IMR-90 (cell line): ENCODE measurements at regions of chr1 and their contacts with region 1.

Region 1: GRCh38 chr1:107782217-107782845 is 182.6 kb downstream of the VAV3 start:
- DNase-seq: peak; percentile 53
- ATAC-seq: peak; percentile 68; the same call in 1 of the 2 replicates
- H3K4me3 ChIP-seq: no peak overlapping the region
- H3K27ac ChIP-seq: no peak overlapping the region
- H3K4me1 ChIP-seq: no peaks in the 10 kb centered on the region
- H3K27me3 ChIP-seq: no peaks in the 10 kb centered on the region
- CTCF ChIP-seq: peak; percentile 68
- POLR2A ChIP-seq: no peak
- RAD21 ChIP-seq: peak; percentile 70

Region 2: GRCh38 chr1:107626911-107627310 is 155.4 kb before region 1 on chr1:
- CTCF ChIA-PET with region 1: no interaction called
- POLR2A ChIA-PET with region 1: no interaction called
- dilution Hi-C with region 1: no loop called
- in situ Hi-C with region 1: no loop called
- intact Hi-C with region 1: no loop called
- DNase-seq: no peak
- ATAC-seq: no peak
- H3K4me3 ChIP-seq: no peak overlapping the region
- H3K27ac ChIP-seq: no peak overlapping the region
- H3K4me1 ChIP-seq: no peaks in the 10 kb centered on the region
- H3K27me3 ChIP-seq: no peaks in the 10 kb centered on the region
- CTCF ChIP-seq: no peak
- POLR2A ChIP-seq: no peak
- RAD21 ChIP-seq: no peak

Region 3: DNA sequence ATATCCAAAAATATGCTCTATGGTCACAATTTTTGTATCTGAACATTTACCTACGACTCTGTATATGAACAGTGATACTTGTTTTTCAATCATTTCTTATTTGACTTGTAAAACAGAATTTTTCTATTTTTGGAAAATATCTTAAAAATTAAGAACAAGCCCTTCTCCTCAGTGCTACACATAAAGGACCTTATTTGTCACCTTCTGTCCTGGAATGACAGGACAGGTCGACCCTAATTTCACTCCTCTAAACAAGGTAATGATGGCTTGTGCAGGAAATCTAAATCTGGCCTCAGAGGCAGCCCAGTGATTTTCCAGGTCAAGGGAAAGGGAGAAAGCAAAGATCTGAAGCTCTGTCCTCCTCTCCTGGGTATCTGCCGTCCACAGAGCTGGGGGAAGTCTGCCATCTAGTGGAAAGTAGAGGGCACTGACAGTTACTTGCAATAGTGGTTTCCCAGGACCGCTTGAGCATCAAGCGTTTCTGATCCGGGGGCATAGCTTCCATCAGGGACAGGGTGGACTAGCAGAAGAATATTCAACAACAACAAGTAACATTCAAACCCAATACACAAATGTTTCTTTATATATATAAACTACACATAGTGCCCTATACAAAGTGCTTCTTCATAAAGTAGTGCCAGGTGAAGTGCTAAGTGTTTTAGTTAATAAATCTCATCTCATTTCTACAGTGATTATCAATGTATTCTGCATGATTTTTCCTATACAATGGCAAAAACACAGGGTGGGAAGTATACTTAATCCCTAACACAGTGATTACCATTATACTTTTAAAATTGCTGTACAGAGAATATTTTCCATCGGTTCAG is 343.2 kb after region 1 on chr1:
- CTCF ChIA-PET with region 1: interaction called, 92 read pairs
- POLR2A ChIA-PET with region 1: interaction called, 3 read pairs
- dilution Hi-C with region 1: no loop called
- in situ Hi-C with region 1: loop called (anchors 5 kb)
- intact Hi-C with region 1: loop called (anchors 1 kb)
- DNase-seq: peak; percentile 77
- ATAC-seq: peak; percentile 95
- H3K4me3 ChIP-seq: no peak overlapping the region
- H3K27ac ChIP-seq: no peak overlapping the region
- H3K4me1 ChIP-seq: peaks cover 3% of the 10 kb centered on the region
- H3K27me3 ChIP-seq: peaks cover under 1% of the 10 kb centered on the region; the same call in 1 of the 2 replicates
- CTCF ChIP-seq: peak; percentile 91
- POLR2A ChIP-seq: 0 out of 2 replicates have a peak, but pooled peaks have one; percentile 35
- RAD21 ChIP-seq: peak; percentile 92

Region 4: GRCh38 chr1:108199781-108200570 is 417.6 kb after region 1 on chr1 and contains the start of gene SLC25A24:
- CTCF ChIA-PET with region 1: no interaction called
- POLR2A ChIA-PET with region 1: no interaction called
- dilution Hi-C with region 1: no loop called
- in situ Hi-C with region 1: no loop called
- intact Hi-C with region 1: loop called (anchors 10 kb)
- DNase-seq: peak; percentile 67
- ATAC-seq: peak; percentile 98
- H3K4me3 ChIP-seq: peak within 1 kb of the TSS; percentile 100
- H3K27ac ChIP-seq: peak within 1 kb of the TSS; percentile 99
- H3K4me1 ChIP-seq: peaks cover 2% of the 10 kb centered on the region; the same call in 1 of the 2 replicates
- H3K27me3 ChIP-seq: no peaks in the 10 kb centered on the region
- CTCF ChIP-seq: no peak
- POLR2A ChIP-seq: no peak; the same call in none of the 2 replicates
- RAD21 ChIP-seq: no peak
- total RNA-seq, gene SLC25A24: 20.4 and 45.3 TPM in 2 replicates

Region 5: GRCh38 chr1:108512239-108512981 is 730.1 kb after region 1 on chr1:
- CTCF ChIA-PET with region 1: no interaction called
- POLR2A ChIA-PET with region 1: no interaction called
- dilution Hi-C with region 1: no loop called
- in situ Hi-C with region 1: no loop called
- intact Hi-C with region 1: loop called (anchors 10 kb)
- DNase-seq: peak; percentile 50
- ATAC-seq: peak; percentile 82
- H3K4me3 ChIP-seq: no peak overlapping the region
- H3K27ac ChIP-seq: no peak overlapping the region
- H3K4me1 ChIP-seq: no peaks in the 10 kb centered on the region
- H3K27me3 ChIP-seq: peaks cover 9% of the 10 kb centered on the region
- CTCF ChIP-seq: peak; percentile 94
- POLR2A ChIP-seq: no peak
- RAD21 ChIP-seq: peak; percentile 93